Activated B cell treated with CpG ODN at 0.5 μM for 24 hours (primary cell): ENCODE measurements at regions of chr6 and their contacts with region 1.

Region 1: GRCh38 chr6:78867370-78868040 is at the start of gene IRAK1BP1:
- DNase-seq: peak; percentile 75
- ATAC-seq: peak; percentile 96
- H3K4me3 Mint-ChIP-seq: peak within 1 kb of the TSS; percentile 99
- H3K27ac Mint-ChIP-seq: peak within 1 kb of the TSS; percentile 98
- H3K4me1 Mint-ChIP-seq: peaks cover 20% of the 10 kb centered on the region
- H3K27me3 Mint-ChIP-seq: no peaks in the 10 kb centered on the region
- CTCF ChIP-seq: no peak
- total RNA-seq, gene IRAK1BP1: 2.4 and 3.0 TPM in 2 replicates

Region 2: DNA sequence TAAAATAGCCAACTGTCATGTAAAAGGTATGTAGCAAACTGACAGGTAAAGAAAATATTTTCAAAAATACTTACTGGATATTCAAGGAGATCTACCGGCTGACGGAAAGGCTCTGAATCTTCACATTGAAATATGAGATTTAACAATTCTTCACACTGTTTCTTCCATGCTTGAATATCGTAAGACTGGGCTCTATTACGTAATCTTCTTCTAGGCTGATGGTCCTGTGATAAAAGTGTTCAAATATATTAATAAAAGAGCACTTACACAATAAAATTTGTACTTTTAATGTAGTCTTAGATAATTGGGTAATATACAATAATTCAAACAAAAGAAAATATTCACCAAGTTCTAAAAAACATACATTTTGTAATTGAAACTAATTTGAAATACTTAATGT is 87.2 kb after region 1 on chr6:
- CTCF ChIA-PET with region 1: no interaction called
- POLR2A ChIA-PET with region 1: no interaction called
- intact Hi-C with region 1: loop called (anchors 5 kb)
- DNase-seq: no peak
- ATAC-seq: no peak
- H3K4me3 Mint-ChIP-seq: no peak overlapping the region
- H3K27ac Mint-ChIP-seq: no peak overlapping the region
- H3K4me1 Mint-ChIP-seq: no peaks in the 10 kb centered on the region
- H3K27me3 Mint-ChIP-seq: no peaks in the 10 kb centered on the region
- CTCF ChIP-seq: no peak

Region 3: GRCh38 chr6:79078075-79079025 is 210.8 kb after region 1 on chr6 and contains the start of gene PHIP:
- CTCF ChIA-PET with region 1: no interaction called
- POLR2A ChIA-PET with region 1: interaction called, 8 read pairs
- intact Hi-C with region 1: loop called (anchors 1 kb)
- DNase-seq: peak; percentile 93
- ATAC-seq: peak; percentile 73
- H3K4me3 Mint-ChIP-seq: peak within 1 kb of the TSS; percentile 87
- H3K27ac Mint-ChIP-seq: peak within 1 kb of the TSS; percentile 96
- H3K4me1 Mint-ChIP-seq: peaks cover 43% of the 10 kb centered on the region
- H3K27me3 Mint-ChIP-seq: peaks cover 3% of the 10 kb centered on the region
- CTCF ChIP-seq: no peak
- total RNA-seq, gene PHIP: 27.7 and 32.3 TPM in 2 replicates

Region 4: DNA sequence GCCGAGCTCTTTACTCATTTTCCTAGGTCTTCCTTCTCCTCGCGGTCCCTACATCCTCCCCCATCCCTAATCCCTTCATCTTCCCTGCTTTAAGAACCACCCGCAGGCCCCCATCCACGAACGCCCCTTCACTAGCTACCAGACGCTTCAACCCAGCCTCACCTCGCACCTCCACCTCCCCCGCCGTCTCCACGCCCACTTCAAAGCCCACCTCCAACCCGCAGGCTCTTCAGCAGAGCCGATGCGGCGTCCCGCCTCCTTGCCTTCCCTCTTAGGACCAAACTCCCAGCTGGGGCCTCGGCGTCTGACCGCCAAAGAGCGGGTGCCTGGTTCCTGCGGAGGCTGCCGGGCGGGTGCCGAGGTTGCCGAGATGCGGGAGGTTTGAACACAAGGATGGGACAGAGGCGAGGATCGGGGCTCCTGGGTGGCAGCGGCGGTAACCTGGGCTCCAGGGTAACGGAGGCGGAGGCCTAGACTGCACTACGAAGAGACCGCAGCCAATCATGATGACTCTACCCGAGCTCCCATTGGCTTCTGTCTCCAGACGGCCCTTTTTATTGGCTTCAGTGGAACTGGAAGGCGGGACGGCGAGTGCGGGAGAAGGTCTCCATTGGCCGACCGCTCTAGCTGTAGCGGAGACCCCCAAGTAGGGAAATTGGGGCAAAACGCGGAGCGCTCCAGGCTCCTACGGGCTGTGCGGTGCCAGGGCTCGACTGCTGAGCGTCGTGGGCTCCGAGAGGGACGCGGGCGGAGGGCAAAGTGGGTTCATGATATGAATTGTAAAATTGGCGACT is 669.6 kb after region 1 on chr6 and contains the start of gene LCA5:
- CTCF ChIA-PET with region 1: no interaction called
- POLR2A ChIA-PET with region 1: no interaction called
- intact Hi-C with region 1: loop called (anchors 5 kb)
- DNase-seq: peak; percentile 73
- ATAC-seq: peak; percentile 98
- H3K4me3 Mint-ChIP-seq: no peak within 1 kb of the TSS
- H3K27ac Mint-ChIP-seq: no peak within 1 kb of the TSS
- H3K4me1 Mint-ChIP-seq: no peaks in the 10 kb centered on the region
- H3K27me3 Mint-ChIP-seq: no peaks in the 10 kb centered on the region
- CTCF ChIP-seq: no peak
- total RNA-seq, gene LCA5: 0.17 and 0.18 TPM in 2 replicates